ENCODE measurements at regions of chr11 and their contacts with region 1.

Region 1: GRCh38 chr11:130894322-130895025 is 21.8 kb downstream of the SNX19 start:
- H3K4me3 ChIP-seq: no peak overlapping the region
- H3K27ac ChIP-seq: no peak overlapping the region
- H3K4me1 ChIP-seq: 0 out of 2 replicates have a peak, but pooled peaks cover 2% of the 10 kb centered on the region
- CTCF ChIP-seq: 0 out of 2 replicates have a peak, but pooled peaks have one; percentile 48

Region 2: GRCh38 chr11:130213143-130213978 is 681.1 kb before region 1 on chr11:
- CTCF ChIA-PET with region 1: interaction called, 10 read pairs
- POLR2A ChIA-PET with region 1: no interaction called
- H3K4me3 ChIP-seq: no peak overlapping the region
- H3K27ac ChIP-seq: no peak overlapping the region
- H3K4me1 ChIP-seq: no peaks in the 10 kb centered on the region
- CTCF ChIP-seq: peak; percentile 67

Region 3: GRCh38 chr11:130801333-130802122 is 92.9 kb before region 1 on chr11:
- CTCF ChIA-PET with region 1: no interaction called
- POLR2A ChIA-PET with region 1: no interaction called
- H3K4me3 ChIP-seq: no peak overlapping the region
- H3K27ac ChIP-seq: no peak overlapping the region
- H3K4me1 ChIP-seq: no peaks in the 10 kb centered on the region
- CTCF ChIP-seq: no peak

Region 4: DNA sequence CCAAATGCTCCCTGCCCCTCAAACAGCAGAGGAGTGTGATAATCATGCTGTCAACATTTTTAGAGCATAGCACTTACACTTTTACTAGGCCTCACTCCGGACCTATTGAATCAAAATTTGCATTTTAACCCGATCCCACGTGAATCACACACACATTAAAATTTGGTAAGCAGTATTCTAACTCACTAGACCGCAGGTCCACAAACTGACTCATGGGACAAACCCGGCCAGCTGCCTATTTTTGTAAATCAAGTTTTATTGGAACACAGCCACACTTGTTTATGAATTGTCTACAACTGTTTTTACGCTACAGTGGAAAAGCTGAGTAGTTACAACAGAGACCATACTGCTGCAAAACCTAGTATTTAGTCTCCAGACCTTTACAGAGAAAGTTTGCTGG is 21.5 kb before region 1 on chr11:
- CTCF ChIA-PET with region 1: interaction called, 16 read pairs
- POLR2A ChIA-PET with region 1: no interaction called
- H3K4me3 ChIP-seq: no peak overlapping the region
- H3K27ac ChIP-seq: no peak overlapping the region
- H3K4me1 ChIP-seq: no peaks in the 10 kb centered on the region
- CTCF ChIP-seq: no peak

Region 5: GRCh38 chr11:130882138-130882551 is 12.3 kb before region 1 on chr11:
- CTCF ChIA-PET with region 1: interaction called, 30 read pairs
- POLR2A ChIA-PET with region 1: no interaction called
- H3K4me3 ChIP-seq: no peak overlapping the region
- H3K27ac ChIP-seq: no peak overlapping the region
- H3K4me1 ChIP-seq: no peaks in the 10 kb centered on the region
- CTCF ChIP-seq: no peak

Region 6: GRCh38 chr11:130916238-130916855 is 21.9 kb after region 1 on chr11 and contains the start of gene SNX19:
- CTCF ChIA-PET with region 1: interaction called, 18 read pairs
- POLR2A ChIA-PET with region 1: no interaction called
- H3K4me3 ChIP-seq: peak within 1 kb of the TSS; percentile 87
- H3K27ac ChIP-seq: peak within 1 kb of the TSS; percentile 54; the same call in 1 of the 2 replicates
- H3K4me1 ChIP-seq: no peaks in the 10 kb centered on the region
- CTCF ChIP-seq: peak; percentile 85

Region 7: GRCh38 chr11:131025020-131025419 is 130.5 kb after region 1 on chr11:
- CTCF ChIA-PET with region 1: no interaction called
- POLR2A ChIA-PET with region 1: no interaction called
- H3K4me3 ChIP-seq: no peak overlapping the region
- H3K27ac ChIP-seq: no peak overlapping the region
- H3K4me1 ChIP-seq: no peaks in the 10 kb centered on the region
- CTCF ChIP-seq: no peak